Astrocyte of the cerebellum (primary cell): ENCODE measurements at regions of chr17 and their contacts with region 1.

Region 1: GRCh38 chr17:29212681-29213121 is 32.5 kb upstream of the MYO18A start:
- DNase-seq: no peak
- H3K4me3 ChIP-seq: no peak overlapping the region
- CTCF ChIP-seq: no peak

Region 2: DNA sequence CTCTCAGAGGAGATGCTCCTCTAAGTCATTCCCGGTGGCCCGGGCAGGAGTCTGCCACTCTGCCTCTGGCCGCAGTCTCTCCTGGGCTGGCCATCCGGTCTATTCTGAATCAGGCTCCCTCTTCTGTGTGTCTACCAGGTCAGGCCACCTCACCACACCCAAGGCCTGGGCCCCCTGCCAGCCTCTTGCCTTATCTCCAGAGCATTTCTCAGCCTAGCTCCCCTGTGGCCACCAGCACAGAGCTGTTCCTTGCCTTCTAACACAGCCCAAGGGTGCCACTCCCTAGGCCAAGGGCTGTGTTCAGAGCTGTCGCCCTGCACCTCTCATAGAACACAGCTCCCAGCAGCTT is 87.8 kb before region 1 on chr17:
- in situ Hi-C with region 1: loop called (anchors 5 kb)
- DNase-seq: no peak
- H3K4me3 ChIP-seq: no peak overlapping the region
- CTCF ChIP-seq: no peak

Region 3: GRCh38 chr17:29155227-29155965 is 57.3 kb before region 1 on chr17:
- in situ Hi-C with region 1: loop called (anchors 5 kb)
- DNase-seq: no peak
- H3K4me3 ChIP-seq: no peak overlapping the region
- CTCF ChIP-seq: no peak

Region 4: DNA sequence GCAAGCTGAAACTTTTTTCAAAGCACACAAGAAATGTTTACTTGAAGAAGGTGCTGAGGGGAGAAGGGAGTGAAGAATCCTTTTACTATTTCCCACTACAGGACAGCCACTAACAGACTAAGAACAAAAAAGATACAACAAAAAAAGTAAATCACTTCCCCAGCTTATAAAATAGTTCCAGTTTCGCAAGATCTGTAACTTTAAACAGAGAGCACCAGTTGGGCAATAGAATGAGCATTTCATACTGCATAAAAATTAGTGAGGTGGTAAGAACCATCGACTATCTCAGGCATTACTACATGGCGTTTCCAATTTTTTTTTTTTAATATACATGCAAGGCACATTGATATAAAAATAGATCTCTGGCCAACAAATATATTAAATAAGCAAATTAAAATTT is 45.1 kb after region 1 on chr17:
- in situ Hi-C with region 1: no loop called
- DNase-seq: no peak
- H3K4me3 ChIP-seq: no peak overlapping the region
- CTCF ChIP-seq: no peak